Transverse colon (tissue), 4 donors: ENCODE measurements at regions of chr17 and their contacts with region 1.

Region 1: DNA sequence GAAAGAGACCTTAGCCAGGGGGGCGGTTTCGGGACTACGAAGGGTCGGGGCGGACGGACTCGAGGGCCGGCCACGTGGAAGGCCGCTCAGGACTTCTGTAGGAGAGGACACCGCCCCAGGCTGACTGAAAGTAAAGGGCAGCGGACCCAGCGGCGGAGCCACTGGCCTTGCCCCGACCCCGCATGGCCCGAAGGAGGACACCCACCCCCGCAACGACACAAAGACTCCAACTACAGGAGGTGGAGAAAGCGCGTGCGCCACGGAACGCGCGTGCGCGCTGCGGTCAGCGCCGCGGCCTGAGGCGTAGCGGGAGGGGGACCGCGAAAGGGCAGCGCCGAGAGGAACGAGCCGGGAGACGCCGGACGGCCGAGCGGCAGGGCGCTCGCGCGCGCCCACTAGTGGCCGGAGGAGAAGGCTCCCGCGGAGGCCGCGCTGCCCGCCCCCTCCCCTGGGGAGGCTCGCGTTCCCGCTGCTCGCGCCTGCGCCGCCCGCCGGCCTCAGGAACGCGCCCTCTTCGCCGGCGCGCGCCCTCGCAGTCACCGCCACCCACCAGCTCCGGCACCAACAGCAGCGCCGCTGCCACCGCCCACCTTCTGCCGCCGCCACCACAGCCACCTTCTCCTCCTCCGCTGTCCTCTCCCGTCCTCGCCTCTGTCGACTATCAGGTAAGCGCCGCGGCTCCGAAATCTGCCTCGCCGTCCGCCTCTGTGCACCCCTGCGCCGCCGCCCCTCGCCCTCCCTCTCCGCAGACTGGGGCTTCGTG is at the start of gene MAPT:
- DNase-seq: peak; percentile 88
- H3K4me3 ChIP-seq: peak within 1 kb of the TSS; percentile 42 to 76 (median 58)
- H3K27ac ChIP-seq: peak within 1 kb of the TSS in 3 of 4 donors; percentile 59 to 68 (median 61)
- H3K4me1 ChIP-seq: peaks cover 7 to 35% (median 20%) of the 10 kb centered on the region in 4 donors
- H3K27me3 ChIP-seq: peaks cover 61% of the 10 kb centered on the region
- CTCF ChIP-seq: peak; percentile 25 to 97 (median 78)
- EP300 ChIP-seq: no peak
- POLR2A ChIP-seq: no peak
- total RNA-seq, gene MAPT: 1.7 to 2.3 (median 1.8) TPM

Region 2: DNA sequence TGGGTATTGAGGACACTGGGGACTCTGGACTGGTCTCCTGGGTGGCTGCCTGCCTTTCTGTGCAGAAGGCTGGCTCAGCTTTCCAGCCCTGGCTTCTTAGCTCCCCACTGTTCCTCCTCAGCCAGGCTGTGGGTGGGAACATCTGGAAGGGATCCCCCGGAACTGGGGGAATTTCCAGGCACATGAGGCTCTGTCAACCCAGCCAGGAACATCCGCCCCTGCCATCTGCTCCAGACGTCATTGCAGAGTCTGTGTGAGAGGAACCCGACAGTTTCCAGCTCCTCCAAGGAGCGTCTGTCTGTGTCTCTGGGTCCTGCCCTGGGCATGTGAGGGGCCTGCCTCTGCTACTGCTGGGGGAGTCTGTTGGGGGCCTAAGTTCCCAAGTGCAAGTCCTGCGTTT is 146.3 kb before region 1 on chr17:
- in situ Hi-C with region 1: no loop called
- intact Hi-C with region 1: no loop called
- DNase-seq: no peak
- H3K4me3 ChIP-seq: no peak overlapping the region
- H3K27ac ChIP-seq: no peak overlapping the region
- H3K4me1 ChIP-seq: no peaks in the 10 kb centered on the region
- H3K27me3 ChIP-seq: peaks cover 43% of the 10 kb centered on the region
- CTCF ChIP-seq: no peak
- EP300 ChIP-seq: no peak
- POLR2A ChIP-seq: no peak

Region 3: GRCh38 chr17:45963889-45964288 is 69.7 kb after region 1 on chr17:
- in situ Hi-C with region 1: no loop called
- intact Hi-C with region 1: loop called (anchors 5 kb)
- DNase-seq: no peak
- H3K4me3 ChIP-seq: no peak overlapping the region
- H3K27ac ChIP-seq: no peak overlapping the region
- H3K4me1 ChIP-seq: no peaks in the 10 kb centered on the region
- H3K27me3 ChIP-seq: peaks cover 14% of the 10 kb centered on the region
- CTCF ChIP-seq: no peak
- EP300 ChIP-seq: no peak
- POLR2A ChIP-seq: no peak